MCF 10A (cell line): ENCODE measurements at regions of chr1 and their contacts with region 1.

Region 1: DNA sequence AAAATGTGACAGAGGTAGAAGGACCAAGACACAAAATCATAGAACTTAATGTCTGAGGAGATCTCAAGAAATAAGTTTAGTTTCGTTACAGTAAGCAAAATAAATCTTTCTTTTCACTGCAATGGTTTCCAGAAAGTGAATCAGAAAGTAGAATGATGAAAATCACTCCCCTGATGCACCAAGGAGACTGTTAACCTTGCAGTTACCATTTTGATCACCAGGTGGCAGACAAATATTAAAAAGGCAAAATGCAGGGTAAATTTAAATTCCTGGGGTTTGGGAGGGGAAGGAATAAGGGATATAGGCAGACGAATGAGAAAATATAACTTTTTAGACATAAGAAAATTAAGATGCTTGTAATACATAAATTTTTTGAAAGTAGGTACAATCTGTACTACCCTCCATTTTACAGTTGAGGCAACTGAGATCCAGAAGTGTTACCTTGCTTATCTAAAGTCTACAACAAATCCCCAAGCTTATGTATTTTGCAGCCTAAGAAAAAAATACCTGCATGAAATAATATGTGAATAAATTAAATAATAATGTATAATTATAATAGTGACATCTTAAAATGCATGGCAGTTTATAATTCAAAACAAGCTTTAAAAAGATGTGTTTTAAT is 253.2 kb downstream of the CRB1 start:
- DNase-seq: peak; percentile 67
- H3K4me3 Mint-ChIP-seq: no peak overlapping the region
- H3K27ac Mint-ChIP-seq: no peak overlapping the region
- H3K4me1 Mint-ChIP-seq: peaks cover 5% of the 10 kb centered on the region
- H3K27me3 Mint-ChIP-seq: no peaks in the 10 kb centered on the region
- CTCF ChIP-seq: peak; percentile 88

Region 2: GRCh38 chr1:197327776-197328364 is 193.4 kb before region 1 on chr1:
- CTCF ChIA-PET with region 1: interaction called, 7 read pairs
- POLR2A ChIA-PET with region 1: no interaction called
- intact Hi-C with region 1: loop called (anchors 10 kb)
- DNase-seq: peak; percentile 33
- H3K4me3 Mint-ChIP-seq: no peak overlapping the region
- H3K27ac Mint-ChIP-seq: no peak overlapping the region
- H3K4me1 Mint-ChIP-seq: no peaks in the 10 kb centered on the region
- H3K27me3 Mint-ChIP-seq: no peaks in the 10 kb centered on the region
- CTCF ChIP-seq: peak; percentile 43

Region 3: GRCh38 chr1:197510691-197511378 is 10.4 kb before region 1 on chr1:
- CTCF ChIA-PET with region 1: interaction called, 17 read pairs
- POLR2A ChIA-PET with region 1: no interaction called
- intact Hi-C with region 1: no loop called
- DNase-seq: no peak
- H3K4me3 Mint-ChIP-seq: no peak overlapping the region
- H3K27ac Mint-ChIP-seq: no peak overlapping the region
- H3K4me1 Mint-ChIP-seq: no peaks in the 10 kb centered on the region
- H3K27me3 Mint-ChIP-seq: no peaks in the 10 kb centered on the region
- CTCF ChIP-seq: no peak

Region 4: DNA sequence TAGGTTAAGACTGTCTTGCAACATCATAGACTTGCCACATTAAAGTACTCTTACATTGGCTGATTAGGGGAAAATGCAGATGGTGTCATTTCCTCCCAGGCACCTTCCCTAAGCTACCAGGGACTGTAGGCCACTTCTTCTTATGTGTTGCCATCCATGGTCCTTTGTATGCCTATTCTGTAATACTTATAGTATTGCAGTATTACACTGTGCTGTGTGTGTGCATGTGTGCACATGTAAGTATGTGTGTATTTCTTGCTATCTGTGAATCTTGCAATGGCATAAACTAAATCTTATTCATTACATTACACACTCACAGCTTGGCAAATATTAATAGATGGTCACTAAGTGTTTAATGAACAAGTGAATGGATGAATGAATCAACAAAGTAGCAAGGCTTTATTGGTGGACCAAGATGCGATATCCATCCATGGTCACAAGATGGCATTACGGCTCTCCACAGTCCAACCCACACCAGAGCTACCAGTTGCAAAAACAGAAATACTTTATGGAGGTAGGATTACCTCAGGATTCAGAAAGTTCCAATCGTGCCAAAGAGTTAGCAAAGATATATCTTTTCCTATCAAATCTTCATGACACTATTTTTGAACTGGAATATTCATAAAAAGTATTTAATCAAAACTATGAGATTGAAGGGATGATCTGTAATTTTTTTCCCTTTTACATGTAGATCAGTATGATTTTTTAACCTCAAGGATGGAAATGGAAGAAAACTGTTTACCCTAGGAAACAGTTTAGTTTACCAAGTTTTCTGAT is 93.9 kb after region 1 on chr1:
- CTCF ChIA-PET with region 1: interaction called, 17 read pairs
- POLR2A ChIA-PET with region 1: no interaction called
- intact Hi-C with region 1: loop called (anchors 5 kb)
- DNase-seq: peak; percentile 67
- H3K4me3 Mint-ChIP-seq: no peak overlapping the region
- H3K27ac Mint-ChIP-seq: no peak overlapping the region
- H3K4me1 Mint-ChIP-seq: no peaks in the 10 kb centered on the region
- H3K27me3 Mint-ChIP-seq: no peaks in the 10 kb centered on the region
- CTCF ChIP-seq: peak; percentile 82

Region 5: DNA sequence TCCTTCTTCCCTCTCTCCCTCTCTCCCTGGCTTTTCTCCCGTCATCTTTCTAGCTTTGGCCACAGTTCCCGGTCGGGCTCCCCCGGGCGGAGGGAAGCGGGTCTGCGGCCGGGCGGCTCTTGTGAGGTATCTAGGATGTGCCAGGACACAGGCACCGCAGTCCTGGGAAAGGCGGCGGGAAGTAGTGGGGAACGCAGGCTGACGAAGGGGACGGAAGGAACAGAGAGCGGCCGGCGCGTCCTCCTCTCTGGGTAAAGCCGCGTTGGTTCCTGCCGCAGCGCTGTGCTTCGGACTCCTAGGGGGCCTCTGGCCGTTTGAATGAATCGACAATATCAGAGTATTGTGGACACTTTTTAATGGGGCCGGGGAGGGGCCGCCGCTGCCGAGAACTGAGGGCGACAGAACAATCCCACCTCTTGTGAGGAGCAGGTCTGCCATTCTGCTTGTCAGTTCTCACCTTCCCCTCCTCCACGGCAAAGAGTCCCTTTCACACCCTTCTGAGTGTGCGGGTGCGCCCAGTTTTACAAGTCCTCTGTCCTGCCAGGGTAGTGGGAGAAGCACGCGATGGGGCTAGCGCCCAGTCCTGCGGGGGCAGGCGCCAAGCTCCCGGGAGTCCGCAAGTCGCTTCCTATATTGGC is 394.8 kb after region 1 on chr1:
- CTCF ChIA-PET with region 1: interaction called, 13 read pairs
- POLR2A ChIA-PET with region 1: no interaction called
- intact Hi-C with region 1: no loop called
- DNase-seq: peak; percentile 66
- H3K4me3 Mint-ChIP-seq: peak overlapping the region; percentile 59
- H3K27ac Mint-ChIP-seq: no peak overlapping the region
- H3K4me1 Mint-ChIP-seq: peaks cover 19% of the 10 kb centered on the region
- H3K27me3 Mint-ChIP-seq: no peaks in the 10 kb centered on the region
- CTCF ChIP-seq: peak; percentile 61

Region 6: DNA sequence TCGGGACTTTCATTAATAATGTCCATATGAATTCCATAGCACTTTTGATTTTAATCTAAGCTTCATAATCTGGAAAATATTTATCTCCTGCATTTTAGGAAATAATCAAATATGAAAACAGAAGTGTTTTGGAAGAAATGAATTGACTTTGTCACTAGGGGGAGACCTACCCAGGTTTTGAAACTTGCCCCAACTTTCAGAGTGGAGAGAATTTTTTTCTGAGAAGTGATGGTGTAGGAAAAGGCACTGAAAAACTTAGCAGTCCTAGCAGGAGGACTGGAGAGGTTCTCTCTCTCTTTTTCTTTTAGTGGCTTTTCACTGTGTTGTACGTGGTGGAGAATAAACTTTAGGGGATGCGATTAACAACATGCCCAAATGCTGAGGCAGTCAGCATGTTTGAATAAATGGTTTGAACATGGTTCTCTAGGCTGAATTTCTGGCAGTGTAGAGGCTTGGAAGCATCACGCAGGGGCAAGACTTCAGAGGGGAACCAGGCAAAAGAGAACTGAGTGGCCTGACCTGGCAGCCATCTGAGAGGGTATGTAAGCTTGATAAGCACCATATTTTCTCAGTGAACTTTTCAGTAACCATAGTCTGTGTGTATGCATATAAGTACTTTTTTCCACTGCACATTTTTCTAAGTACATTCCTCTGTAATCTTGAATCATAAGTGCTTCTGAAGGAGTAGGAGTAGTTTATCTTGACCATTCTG is 567.3 kb after region 1 on chr1:
- CTCF ChIA-PET with region 1: no interaction called
- POLR2A ChIA-PET with region 1: no interaction called
- intact Hi-C with region 1: loop called (anchors 10 kb)
- DNase-seq: peak; percentile 64
- H3K4me3 Mint-ChIP-seq: no peak overlapping the region
- H3K27ac Mint-ChIP-seq: no peak overlapping the region
- H3K4me1 Mint-ChIP-seq: peaks cover 7% of the 10 kb centered on the region
- H3K27me3 Mint-ChIP-seq: no peaks in the 10 kb centered on the region
- CTCF ChIP-seq: peak; percentile 71